Head of caudate nucleus (tissue), 42 donors: ENCODE measurements at regions of chr18 and their contacts with region 1.

Region 1: DNA sequence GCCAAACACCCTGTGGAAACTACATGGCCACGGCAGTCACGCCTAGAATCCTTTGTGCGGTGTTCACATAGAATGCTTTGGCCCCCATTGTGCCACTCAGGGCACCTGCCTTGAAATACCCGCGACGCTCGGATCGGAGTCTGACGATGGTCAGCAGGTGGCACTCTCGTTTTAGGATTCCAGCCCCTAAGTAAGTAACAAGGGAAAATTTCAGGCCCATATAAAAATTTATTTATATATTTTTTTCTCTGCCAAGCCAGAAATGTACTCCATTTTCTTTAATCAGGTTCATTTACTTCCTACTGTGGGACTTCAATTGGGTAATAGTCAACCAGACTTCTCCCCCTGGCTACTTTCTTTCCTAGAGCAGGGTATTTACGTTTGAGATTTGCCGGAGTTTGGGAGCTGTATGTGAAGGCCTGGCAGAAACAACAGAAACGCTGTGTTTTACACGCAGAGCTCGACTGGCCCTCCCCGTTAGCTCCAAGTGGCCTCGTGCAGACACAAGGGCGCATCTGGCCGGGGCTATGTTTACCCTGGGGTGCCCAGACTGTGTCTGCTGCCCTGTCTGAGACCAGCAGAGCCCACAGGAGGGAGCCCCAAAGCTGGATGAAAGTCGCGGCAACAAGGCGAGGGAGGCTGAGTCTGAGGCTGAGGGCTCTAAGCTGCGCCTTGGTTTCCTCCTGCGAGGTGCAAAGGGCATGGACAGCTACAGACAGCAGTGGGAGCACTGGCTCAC is 41.6 kb downstream of the LRRC30 start:
- DNase-seq: peak; percentile 64 to 90 (median 78)

Region 2: GRCh38 chr18:7566567-7567473 is 294.3 kb after region 1 on chr18 and contains the start of gene PTPRM:
- intact Hi-C with region 1: loop called (anchors 2 kb)
- DNase-seq: peak; percentile 53 to 91 (median 81)

Region 3: DNA sequence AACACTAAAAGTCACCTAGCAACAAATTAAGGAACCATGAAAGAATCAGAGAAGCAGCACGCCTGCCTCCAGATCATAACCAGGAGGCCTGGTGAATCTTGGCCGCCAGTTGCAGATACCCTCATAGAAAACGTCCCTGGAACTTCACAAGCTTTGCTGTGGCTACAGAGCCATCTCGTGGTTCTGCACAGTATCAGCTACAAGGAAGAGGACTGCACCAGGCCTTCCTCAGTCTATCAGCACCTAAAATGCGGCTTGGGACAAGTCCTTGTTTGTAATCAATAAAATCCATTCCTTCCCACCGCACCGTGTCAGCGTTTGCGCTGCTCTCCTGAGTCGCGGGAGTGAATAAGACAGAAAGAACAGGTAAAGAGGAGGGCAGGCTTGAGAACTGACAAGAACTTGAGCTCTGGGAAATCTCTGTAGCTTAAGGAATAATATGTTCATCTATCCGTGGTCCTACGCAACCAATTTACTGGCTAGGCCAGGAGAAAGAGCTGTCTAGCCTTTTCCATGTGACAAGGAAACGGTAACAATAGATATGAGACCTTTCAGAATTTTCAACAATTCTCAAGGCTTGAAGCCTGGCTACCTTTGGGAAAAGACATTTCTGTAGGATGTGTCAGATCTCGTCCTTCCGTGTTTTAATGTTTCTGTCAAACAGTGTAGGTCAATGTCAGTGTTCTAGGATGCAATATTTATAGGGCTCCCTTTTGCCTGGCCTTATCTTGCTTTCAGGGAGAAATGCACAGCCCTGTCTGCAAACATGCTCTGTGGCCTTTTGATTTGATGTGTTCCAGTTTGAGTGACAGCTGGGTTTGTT is 1208.2 kb after region 1 on chr18:
- intact Hi-C with region 1: loop called (anchors 5 kb)
- DNase-seq: peak; percentile 22 to 85 (median 60)